H1 (cell line): ENCODE measurements at regions of chr6 and their contacts with region 1.

Region 1: DNA sequence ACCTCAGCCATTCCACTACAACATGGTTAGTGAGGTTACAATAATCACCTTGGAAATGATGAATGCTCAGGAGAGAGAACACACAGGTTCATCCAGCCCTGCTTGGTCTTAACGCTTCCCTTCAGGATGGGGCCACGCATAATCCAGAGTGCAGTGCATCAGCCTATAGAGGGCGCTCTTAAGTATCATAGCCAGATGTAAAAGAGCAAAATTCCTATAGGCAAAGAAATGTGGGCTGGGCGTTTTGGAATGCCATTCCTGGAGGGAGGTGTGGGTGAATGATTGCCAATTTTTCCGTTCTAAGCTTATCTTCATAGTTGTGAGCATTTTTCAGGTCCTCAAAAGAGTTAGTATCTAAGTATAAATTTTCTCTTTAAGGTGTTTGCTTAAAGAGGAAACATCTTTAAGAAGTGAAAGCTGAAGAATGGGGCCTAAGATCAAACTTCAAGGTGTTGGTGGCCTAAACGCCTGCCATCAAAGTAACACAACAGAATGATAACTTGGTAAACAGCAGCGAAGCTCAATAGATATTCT is 1.8 kb downstream of the RIPOR2 start:
- DNase-seq: peak in 1 of 2 experiments; percentile 70
- H3K4me3 ChIP-seq: peak overlapping the region in 1 of 4 experiments; percentile 53; a peak in 2 of 8 replicates
- H3K27ac ChIP-seq: no peak overlapping the region
- H3K4me1 ChIP-seq: peaks cover 4 to 25% (median 19%) of the 10 kb centered on the region in 4 experiments; a peak in 6 of 7 replicates
- H3K27me3 ChIP-seq: no peaks in the 10 kb centered on the region; a peak in 1 of 7 replicates
- CTCF ChIP-seq: peak; percentile 57 to 91 (median 68)
- EP300 ChIP-seq: no peak
- POLR2A ChIP-seq: no peak
- RAD21 ChIP-seq: peak; percentile 49 to 69

Region 2: GRCh38 chr6:24844061-24844460 is 89.9 kb before region 1 on chr6:
- CTCF ChIA-PET with region 1: no interaction called
- POLR2A ChIA-PET with region 1: no interaction called
- DNase-seq: no peak
- H3K4me3 ChIP-seq: no peak overlapping the region
- H3K27ac ChIP-seq: no peak overlapping the region
- H3K4me1 ChIP-seq: no peaks in the 10 kb centered on the region
- H3K27me3 ChIP-seq: no peaks in the 10 kb centered on the region
- CTCF ChIP-seq: no peak
- EP300 ChIP-seq: no peak
- POLR2A ChIP-seq: no peak
- RAD21 ChIP-seq: no peak

Region 3: DNA sequence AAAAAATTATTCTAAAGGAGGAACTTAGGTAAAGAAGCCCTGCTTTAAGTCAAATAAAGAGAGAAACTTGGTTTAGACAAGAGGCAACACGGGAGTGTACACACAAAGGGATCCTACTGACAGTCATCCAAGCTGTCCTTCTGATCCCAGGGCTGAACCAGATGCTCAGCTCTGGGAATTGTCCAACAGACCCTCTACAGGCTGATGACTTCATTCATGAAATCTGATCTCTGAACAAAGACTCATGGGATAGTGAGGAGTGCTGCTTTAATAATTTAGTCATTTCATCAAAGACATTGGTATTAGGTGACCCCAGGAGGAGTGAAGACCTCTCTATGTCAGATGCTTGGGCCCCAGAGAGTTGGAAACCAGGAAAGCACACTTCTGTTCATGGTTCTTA is 69.6 kb before region 1 on chr6:
- CTCF ChIA-PET with region 1: interaction called, 35 read pairs
- POLR2A ChIA-PET with region 1: no interaction called
- DNase-seq: no peak
- H3K4me3 ChIP-seq: no peak overlapping the region
- H3K27ac ChIP-seq: no peak overlapping the region
- H3K4me1 ChIP-seq: no peaks in the 10 kb centered on the region
- H3K27me3 ChIP-seq: no peaks in the 10 kb centered on the region
- CTCF ChIP-seq: no peak
- EP300 ChIP-seq: no peak
- POLR2A ChIP-seq: no peak
- RAD21 ChIP-seq: no peak

Region 4: GRCh38 chr6:24899997-24900325 is 34.0 kb before region 1 on chr6:
- CTCF ChIA-PET with region 1: interaction called, 15 read pairs
- POLR2A ChIA-PET with region 1: no interaction called
- DNase-seq: no peak
- H3K4me3 ChIP-seq: no peak overlapping the region
- H3K27ac ChIP-seq: no peak overlapping the region
- H3K4me1 ChIP-seq: peaks cover 4 to 6% (median 5%) of the 10 kb centered on the region in 4 experiments; a peak in 4 of 7 replicates
- H3K27me3 ChIP-seq: no peaks in the 10 kb centered on the region
- CTCF ChIP-seq: no peak
- EP300 ChIP-seq: no peak
- POLR2A ChIP-seq: no peak
- RAD21 ChIP-seq: no peak

Region 5: GRCh38 chr6:24919004-24919892 is 14.7 kb before region 1 on chr6:
- CTCF ChIA-PET with region 1: interaction called, 138 read pairs
- POLR2A ChIA-PET with region 1: interaction called, 8 read pairs
- DNase-seq: no peak
- H3K4me3 ChIP-seq: no peak overlapping the region; a peak in 1 of 8 replicates
- H3K27ac ChIP-seq: no peak overlapping the region
- H3K4me1 ChIP-seq: peaks cover 9 to 29% (median 21%) of the 10 kb centered on the region in 4 experiments
- H3K27me3 ChIP-seq: no peaks in the 10 kb centered on the region
- CTCF ChIP-seq: no peak
- EP300 ChIP-seq: no peak
- POLR2A ChIP-seq: no peak
- RAD21 ChIP-seq: no peak

Region 6: DNA sequence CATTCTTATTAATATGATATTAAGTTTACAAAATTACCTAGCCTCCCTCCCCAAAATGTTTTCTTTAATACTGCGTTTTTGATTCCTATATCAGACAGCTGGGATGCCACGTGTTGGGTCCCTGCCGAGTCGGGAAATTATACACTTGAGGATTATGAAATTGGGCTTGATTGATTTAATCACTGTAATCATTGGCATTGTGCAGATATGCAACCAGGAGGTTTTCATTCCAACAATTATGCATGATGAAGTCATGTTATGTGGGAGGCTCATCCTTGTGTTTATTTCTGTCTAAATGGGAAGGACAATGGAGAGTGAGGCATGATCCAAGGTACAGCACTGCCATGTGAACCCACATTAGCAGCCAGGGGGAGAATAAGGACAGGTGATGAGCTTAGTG is 32.4 kb after region 1 on chr6:
- CTCF ChIA-PET with region 1: interaction called, 19 read pairs
- POLR2A ChIA-PET with region 1: interaction called, 4 read pairs
- DNase-seq: no peak
- H3K4me3 ChIP-seq: no peak overlapping the region
- H3K27ac ChIP-seq: no peak overlapping the region
- H3K4me1 ChIP-seq: peaks cover 0 to 7% (median 2%) of the 10 kb centered on the region in 4 experiments; a peak in 2 of 7 replicates
- H3K27me3 ChIP-seq: no peaks in the 10 kb centered on the region
- CTCF ChIP-seq: no peak
- EP300 ChIP-seq: no peak
- POLR2A ChIP-seq: no peak
- RAD21 ChIP-seq: no peak

Region 7: GRCh38 chr6:25017932-25018567 is 84.1 kb after region 1 on chr6:
- CTCF ChIA-PET with region 1: interaction called, 23 read pairs
- POLR2A ChIA-PET with region 1: interaction called, 3 read pairs
- DNase-seq: peak; percentile 66 to 75
- H3K4me3 ChIP-seq: no peak overlapping the region
- H3K27ac ChIP-seq: no peak overlapping the region
- H3K4me1 ChIP-seq: peaks cover 0 to 10% (median 0%) of the 10 kb centered on the region in 4 experiments; a peak in 4 of 7 replicates
- H3K27me3 ChIP-seq: no peaks in the 10 kb centered on the region
- CTCF ChIP-seq: peak; percentile 43 to 94 (median 91)
- EP300 ChIP-seq: no peak
- POLR2A ChIP-seq: no peak
- RAD21 ChIP-seq: peak; percentile 100